ENCODE measurements at regions of chr6 and their contacts with region 1.

Region 1: GRCh38 chr6:32741031-32741960 is at the start of gene HLA-DQA2:
- DNase-seq: no peak
- H3K4me3 ChIP-seq: no peak within 1 kb of the TSS
- CTCF ChIP-seq: no peak

Region 2: DNA sequence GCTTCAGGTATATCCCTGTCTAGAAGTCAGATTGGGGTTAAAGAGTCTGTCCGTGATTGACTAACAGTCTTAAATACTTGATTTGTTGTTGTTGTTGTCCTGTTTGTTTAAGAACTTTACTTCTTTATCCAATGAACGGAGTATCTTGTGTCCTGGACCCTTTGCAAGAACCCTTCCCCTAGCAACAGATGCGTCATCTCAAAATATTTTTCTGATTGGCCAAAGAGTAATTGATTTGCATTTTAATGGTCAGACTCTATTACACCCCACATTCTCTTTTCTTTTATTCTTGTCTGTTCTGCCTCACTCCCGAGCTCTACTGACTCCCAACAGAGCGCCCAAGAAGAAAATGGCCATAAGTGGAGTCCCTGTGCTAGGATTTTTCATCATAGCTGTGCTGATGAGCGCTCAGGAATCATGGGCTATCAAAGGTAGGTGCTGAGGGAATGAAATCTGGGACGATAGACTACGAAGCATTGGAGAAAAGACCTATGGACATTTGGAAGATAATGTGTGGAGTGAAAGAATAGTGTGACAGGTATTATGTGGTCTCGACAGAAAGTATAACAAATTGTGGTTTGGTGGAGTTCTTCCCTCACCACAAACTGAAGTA is 301.6 kb before region 1 on chr6 and contains the start of gene HLA-DRA:
- in situ Hi-C with region 1: loop called (anchors 5 kb)
- DNase-seq: peak; percentile 31
- H3K4me3 ChIP-seq: no peak within 1 kb of the TSS
- CTCF ChIP-seq: no peak